MCF 10A (cell line): ENCODE measurements at regions of chr20 and their contacts with region 1.

Region 1: DNA sequence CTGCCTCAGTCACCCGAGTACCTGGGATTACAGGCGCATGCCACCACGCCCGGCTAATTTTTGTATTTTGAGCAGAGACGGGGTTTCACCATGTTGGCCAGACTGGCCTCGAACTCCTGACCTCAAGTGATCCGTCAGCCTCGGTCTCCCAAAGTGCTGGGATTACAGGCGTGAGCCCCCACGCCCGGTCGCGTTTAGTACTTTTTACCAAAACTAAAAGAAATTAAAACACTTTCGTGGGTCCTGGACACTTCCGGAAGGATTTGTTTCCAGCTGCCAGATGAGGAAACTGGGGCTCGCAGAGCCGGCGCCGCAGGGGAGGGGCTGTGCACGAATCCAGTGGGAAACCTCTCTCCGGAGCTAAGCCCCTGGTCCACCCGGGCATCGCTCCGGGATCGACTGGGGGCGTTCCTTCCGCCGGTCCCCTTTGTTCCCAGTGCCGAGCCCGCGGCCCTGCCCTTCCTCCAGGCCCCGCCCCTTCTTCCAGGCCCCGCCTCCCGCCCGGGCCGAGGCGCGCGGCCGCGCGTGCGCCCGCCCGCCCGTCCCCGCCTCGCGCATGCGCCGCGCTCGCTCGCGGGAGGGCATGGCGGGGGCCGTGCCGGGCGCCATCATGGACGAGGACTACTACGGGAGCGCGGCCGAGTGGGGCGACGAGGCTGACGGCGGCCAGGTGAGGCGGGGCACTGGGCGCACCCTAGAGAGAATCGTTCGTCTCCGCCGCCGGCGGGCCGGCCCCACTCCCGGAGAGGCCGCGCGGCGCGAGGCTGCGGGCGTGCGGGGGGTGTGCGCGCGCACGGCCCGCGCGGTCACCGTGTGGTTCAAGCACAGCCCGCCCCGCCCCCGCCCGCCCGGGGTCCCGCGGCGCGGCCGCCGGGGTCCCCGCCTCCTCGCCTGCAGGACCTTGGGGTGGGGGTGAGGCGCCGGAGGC is at the start of gene NELFCD:
- DNase-seq: peak; percentile 78
- H3K4me3 Mint-ChIP-seq: peak within 1 kb of the TSS; percentile 78
- H3K27ac Mint-ChIP-seq: peak within 1 kb of the TSS; percentile 54
- H3K4me1 Mint-ChIP-seq: peaks cover 27% of the 10 kb centered on the region
- H3K27me3 Mint-ChIP-seq: no peaks in the 10 kb centered on the region
- CTCF ChIP-seq: no peak
- total RNA-seq, gene NELFCD: 59.6 and 79.8 TPM in 2 replicates

Region 2: DNA sequence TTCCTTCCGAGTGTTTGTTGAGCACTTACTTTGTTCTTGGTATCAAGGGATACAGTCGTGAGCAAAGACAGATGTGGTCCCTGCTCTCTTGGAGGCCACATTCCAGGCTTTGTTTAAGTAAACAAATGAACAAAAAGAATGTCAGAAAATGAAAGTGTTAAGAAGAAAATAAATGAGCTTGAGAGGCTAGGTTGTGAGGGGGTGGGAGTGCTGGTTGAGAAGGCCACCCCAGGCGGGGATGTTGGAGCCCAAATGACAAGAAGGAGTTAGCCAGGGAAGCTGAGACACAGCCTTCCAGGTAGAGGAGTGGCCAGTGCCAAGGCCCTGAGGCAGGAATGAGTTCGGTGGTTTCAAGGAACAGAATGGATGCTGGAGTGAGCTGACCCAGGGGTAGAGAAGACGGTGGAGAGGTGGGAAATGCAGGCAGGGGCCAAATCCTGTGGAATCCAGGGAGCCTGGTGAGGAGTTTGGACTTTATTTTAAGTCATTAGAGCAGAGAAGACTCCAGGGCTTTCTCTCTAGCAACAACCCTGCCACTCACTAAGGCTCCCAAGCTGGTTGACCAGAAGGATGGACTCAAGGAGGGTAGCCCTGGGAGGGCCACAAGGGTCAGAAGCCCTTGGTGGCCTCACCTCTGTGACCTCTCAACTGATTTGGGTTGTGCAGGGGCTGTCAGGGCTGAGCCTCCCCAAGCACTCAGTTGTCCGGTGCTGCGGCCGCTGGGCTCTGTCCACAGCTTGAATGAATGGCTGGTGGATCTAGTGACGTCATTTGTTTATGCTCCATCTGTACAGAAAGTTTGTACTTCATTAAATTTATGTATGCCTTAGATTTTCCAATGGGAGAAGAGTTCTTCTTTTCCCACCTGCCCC is 395.8 kb before region 1 on chr20:
- CTCF ChIA-PET with region 1: no interaction called
- POLR2A ChIA-PET with region 1: no interaction called
- intact Hi-C with region 1: no loop called
- DNase-seq: no peak
- H3K4me3 Mint-ChIP-seq: no peak overlapping the region
- H3K27ac Mint-ChIP-seq: no peak overlapping the region
- H3K4me1 Mint-ChIP-seq: no peaks in the 10 kb centered on the region
- H3K27me3 Mint-ChIP-seq: peaks cover 51% of the 10 kb centered on the region
- CTCF ChIP-seq: no peak

Region 3: DNA sequence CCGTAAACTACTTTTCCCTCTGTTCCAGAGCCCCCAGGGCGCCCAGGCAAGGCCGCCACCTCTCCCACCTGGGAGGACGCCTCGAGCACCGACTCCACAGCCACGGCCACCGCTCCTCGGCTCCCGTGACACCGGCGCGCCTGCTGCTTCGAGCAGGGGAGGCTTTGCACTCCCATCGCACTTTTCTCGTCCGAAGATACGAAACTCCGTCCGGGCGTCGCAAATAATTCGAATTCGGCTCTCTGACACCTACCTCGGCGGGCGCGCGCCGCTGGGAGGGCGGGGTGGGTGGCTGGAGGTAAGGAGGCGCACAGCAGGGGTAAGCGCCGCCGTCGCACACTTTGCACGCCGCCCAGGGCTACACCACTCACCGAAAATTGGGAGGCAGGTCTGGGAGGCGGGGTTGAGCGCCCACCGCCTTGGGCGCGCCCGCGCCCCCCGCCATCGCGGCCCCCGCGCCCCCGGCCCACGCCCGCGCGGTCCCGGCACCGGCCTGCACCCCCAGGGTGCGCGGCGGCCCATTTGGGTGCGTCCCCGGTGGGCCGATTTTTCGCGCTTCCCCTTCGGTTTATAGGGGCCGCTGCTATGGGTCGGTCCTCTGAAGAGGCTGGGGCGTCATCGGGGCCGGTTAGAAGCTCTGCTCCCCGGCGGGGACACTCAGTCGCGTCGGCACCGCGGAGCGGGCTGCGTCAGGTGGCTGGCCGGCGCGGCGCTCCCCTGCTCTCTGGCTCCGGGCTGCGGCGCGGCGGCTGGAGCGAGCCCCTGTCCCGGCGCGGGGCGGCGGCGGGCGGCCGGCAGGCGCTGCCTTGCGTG is 92.2 kb before region 1 on chr20:
- CTCF ChIA-PET with region 1: no interaction called
- POLR2A ChIA-PET with region 1: interaction called, 18 read pairs
- intact Hi-C with region 1: loop called (anchors 2 kb)
- DNase-seq: peak; percentile 73
- H3K4me3 Mint-ChIP-seq: peak overlapping the region; percentile 92
- H3K27ac Mint-ChIP-seq: no peak overlapping the region
- H3K4me1 Mint-ChIP-seq: peaks cover 5% of the 10 kb centered on the region
- H3K27me3 Mint-ChIP-seq: no peaks in the 10 kb centered on the region
- CTCF ChIP-seq: no peak

Region 4: GRCh38 chr20:58907399-58908137 is 73.4 kb before region 1 on chr20:
- CTCF ChIA-PET with region 1: no interaction called
- POLR2A ChIA-PET with region 1: interaction called, 15 read pairs
- intact Hi-C with region 1: no loop called
- DNase-seq: peak; percentile 95
- H3K4me3 Mint-ChIP-seq: peak overlapping the region; percentile 12
- H3K27ac Mint-ChIP-seq: peak overlapping the region; percentile 50
- H3K4me1 Mint-ChIP-seq: peaks cover 17% of the 10 kb centered on the region
- H3K27me3 Mint-ChIP-seq: no peaks in the 10 kb centered on the region
- CTCF ChIP-seq: no peak

Region 5: DNA sequence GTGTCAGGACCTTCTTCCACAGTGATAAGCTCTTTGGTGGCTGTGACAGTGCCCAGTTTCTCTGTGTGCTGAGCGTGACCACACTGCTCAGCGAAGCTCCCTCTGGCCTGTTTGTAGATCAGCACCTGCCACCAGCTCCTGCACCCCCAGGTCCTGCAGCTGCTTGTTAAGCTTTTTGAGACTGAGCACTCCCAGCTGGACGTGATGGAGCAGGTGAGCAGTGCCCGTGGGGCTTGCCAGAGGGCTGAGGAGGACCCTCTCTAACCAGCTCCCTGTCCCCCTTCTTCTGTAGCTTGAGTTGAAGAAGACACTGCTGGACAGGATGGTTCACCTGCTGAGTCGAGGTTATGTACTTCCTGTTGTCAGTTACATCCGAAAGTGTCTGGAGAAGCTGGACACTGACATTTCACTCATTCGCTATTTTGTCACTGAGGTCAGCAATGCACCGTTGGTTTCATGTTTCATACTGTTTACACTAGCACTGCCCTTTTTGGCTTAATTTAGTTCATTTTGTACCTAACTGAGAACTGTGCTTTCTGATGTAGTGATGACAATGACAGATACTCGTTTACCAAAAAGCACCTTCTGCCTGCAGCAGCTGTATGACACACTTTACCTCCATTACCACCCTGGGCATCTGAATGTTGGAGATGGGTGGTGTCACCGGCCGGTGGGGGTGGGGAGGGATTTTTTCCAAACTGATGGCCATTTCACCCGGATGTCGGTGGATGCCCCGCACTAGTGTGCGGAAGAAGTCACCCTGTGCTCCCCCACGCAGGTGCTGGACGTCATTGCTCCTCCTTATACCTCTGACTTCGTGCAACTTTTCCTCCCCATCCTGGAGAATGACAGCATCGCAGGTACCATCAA is 12.6 kb after region 1 on chr20:
- CTCF ChIA-PET with region 1: interaction called, 4 read pairs
- POLR2A ChIA-PET with region 1: interaction called, 10 read pairs
- intact Hi-C with region 1: no loop called
- DNase-seq: no peak
- H3K4me3 Mint-ChIP-seq: no peak overlapping the region
- H3K27ac Mint-ChIP-seq: no peak overlapping the region
- H3K4me1 Mint-ChIP-seq: no peaks in the 10 kb centered on the region
- H3K27me3 Mint-ChIP-seq: no peaks in the 10 kb centered on the region
- CTCF ChIP-seq: no peak